BJ (cell line): ENCODE measurements at regions of chr7 and their contacts with region 1.

Region 1: DNA sequence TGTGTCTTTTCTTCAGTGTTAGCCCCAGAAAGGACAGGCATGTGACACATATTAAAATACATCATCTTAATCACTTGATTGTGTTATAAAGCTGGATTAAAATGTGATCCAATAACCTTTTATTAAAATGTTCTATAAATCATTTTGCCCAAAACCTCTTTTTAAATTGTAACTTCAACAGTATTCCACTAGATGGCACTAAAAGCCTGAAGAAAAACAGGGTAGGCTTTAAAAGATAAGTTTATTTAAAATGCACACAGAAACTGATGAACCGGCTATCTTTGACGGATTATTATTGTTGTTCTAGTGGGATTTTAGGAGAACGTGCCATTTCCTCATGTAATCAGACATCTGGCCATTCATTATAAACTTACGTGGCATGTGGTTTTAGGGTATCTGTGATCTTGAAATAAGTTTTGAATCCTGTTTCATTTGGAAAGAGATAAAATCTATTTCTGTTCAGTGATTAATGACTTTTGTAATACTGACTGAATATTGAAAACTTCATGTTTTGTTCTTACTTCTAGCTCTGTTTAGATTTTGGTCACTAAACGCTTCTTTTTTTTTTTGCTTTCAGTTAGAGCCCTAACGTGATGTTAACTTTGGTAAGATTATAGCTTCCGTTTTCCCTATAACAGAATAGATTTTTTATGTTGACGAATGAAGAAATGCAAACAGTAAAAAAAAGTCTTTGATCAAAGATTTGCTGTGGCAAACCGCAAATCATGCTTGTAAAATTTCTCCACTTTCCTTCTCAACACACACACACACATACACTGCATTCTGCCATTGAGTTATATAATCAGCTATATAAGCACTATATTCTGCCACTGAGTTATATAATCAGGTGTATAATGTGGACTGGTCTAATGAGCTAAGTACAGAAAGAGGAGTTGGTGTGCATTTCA is 13.6 kb downstream of the VPS50 start:
- DNase-seq: no peak
- H3K4me3 ChIP-seq: no peak overlapping the region
- H3K27me3 ChIP-seq: no peaks in the 10 kb centered on the region
- CTCF ChIP-seq: peak; percentile 35; the same call in 1 of the 2 replicates

Region 2: GRCh38 chr7:93374345-93374940 is 128.7 kb after region 1 on chr7:
- CTCF ChIA-PET with region 1: interaction called, 19 read pairs
- POLR2A ChIA-PET with region 1: no interaction called
- DNase-seq: peak; percentile 6
- H3K4me3 ChIP-seq: no peak overlapping the region
- H3K27me3 ChIP-seq: peaks cover 4% of the 10 kb centered on the region
- CTCF ChIP-seq: peak; percentile 93

Region 3: GRCh38 chr7:93551063-93551904 is 305.5 kb after region 1 on chr7:
- CTCF ChIA-PET with region 1: interaction called, 38 read pairs
- POLR2A ChIA-PET with region 1: no interaction called
- DNase-seq: no peak
- H3K4me3 ChIP-seq: no peak overlapping the region
- H3K27me3 ChIP-seq: peaks cover 2% of the 10 kb centered on the region; the same call in 1 of the 2 replicates
- CTCF ChIP-seq: peak; percentile 61